ENCODE measurements at regions of chr1 and their contacts with region 1.

Region 1: DNA sequence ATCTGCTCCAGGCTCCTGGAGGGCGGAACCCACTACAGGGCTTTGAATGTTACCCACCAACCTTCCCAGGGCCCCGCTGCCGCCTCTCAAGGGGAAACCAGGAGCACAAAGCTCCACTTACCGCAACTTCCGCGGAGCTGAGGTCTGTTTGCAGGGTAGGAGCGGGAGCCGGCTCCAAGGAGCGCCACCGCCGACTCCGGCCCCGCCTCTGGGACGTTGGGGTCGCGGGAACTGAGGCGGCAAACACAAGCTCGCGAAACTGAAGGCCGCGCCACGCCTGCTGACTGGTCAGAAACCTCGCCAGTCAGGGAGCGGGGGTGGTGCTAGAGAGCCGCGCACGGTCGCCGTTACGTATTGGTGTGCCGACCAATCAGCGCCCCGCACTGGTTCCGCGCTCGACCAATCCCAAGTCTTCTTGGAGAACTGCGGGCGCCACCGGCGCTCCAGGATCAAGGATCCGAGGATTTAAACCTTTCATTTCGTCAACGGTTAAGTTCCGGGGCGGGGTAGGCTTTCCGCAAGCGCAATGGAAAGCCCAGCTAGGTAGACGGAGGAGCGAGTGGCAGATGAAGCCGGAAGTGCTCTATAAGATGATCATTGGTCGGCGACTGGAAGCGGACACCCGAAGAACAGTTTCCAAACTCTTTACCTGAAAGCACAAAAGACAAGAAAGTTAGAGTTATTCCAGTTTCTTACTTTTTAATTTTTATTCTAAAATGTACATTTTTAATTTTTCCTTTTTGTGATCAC is at the start of gene STIL:
- DNase-seq: peak; percentile 99
- H3K4me3 Mint-ChIP-seq: peak within 1 kb of the TSS; percentile 91
- H3K27ac Mint-ChIP-seq: peak within 1 kb of the TSS; percentile 94
- H3K4me1 Mint-ChIP-seq: peaks cover 5% of the 10 kb centered on the region
- H3K27me3 Mint-ChIP-seq: no peaks in the 10 kb centered on the region
- CTCF ChIP-seq: no peak
- total RNA-seq, gene STIL: 8.8 and 12.6 TPM in 2 replicates

Region 2: GRCh38 chr1:47325530-47325929 is 11.4 kb after region 1 on chr1:
- CTCF ChIA-PET with region 1: interaction called, 17 read pairs
- POLR2A ChIA-PET with region 1: interaction called, 32 read pairs
- intact Hi-C with region 1: no loop called
- DNase-seq: peak; percentile 78
- H3K4me3 Mint-ChIP-seq: no peak overlapping the region
- H3K27ac Mint-ChIP-seq: no peak overlapping the region
- H3K4me1 Mint-ChIP-seq: no peaks in the 10 kb centered on the region
- H3K27me3 Mint-ChIP-seq: no peaks in the 10 kb centered on the region
- CTCF ChIP-seq: no peak

Region 3: DNA sequence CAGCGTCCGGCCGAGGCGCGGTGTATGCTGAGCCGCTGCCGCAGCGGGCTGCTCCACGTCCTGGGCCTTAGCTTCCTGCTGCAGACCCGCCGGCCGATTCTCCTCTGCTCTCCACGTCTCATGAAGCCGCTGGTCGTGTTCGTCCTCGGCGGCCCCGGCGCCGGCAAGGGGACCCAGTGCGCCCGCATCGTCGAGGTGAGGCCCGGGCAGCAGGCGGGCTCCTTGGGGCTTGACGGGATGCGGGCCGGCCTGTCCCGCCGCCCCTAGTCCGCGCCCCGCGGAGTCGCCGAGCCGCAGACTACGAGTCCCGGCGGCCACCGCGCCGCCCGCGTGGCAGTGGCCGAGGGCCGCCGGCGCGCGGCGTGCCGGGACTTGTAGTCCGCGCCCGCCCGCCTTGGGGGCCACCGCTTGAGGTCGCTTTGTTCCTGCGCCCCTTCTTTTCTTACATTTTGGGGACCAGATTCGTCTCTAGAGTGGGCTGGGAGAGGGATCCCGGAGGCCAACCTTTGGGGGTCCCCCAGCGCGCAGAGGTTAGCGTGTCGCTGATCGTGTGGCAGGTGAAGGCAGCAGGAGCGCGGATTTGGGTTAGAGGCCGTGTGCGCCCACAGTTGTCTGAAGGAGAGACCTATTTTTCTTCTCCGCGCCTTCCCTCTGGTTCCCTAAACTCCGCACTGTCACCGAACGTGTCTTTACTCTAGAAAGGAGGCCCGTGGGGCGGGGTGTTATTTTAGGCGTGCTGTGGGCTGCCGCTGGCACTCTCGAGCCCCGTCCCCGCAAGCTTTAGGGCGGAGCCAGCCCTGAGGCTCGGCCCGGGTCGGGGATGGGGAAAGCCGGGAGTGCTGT is 20.1 kb after region 1 on chr1:
- CTCF ChIA-PET with region 1: interaction called, 4 read pairs
- POLR2A ChIA-PET with region 1: interaction called, 57 read pairs
- intact Hi-C with region 1: loop called (anchors 1 kb)
- DNase-seq: peak; percentile 73
- H3K4me3 Mint-ChIP-seq: no peak overlapping the region
- H3K27ac Mint-ChIP-seq: no peak overlapping the region
- H3K4me1 Mint-ChIP-seq: peaks cover 6% of the 10 kb centered on the region
- H3K27me3 Mint-ChIP-seq: no peaks in the 10 kb centered on the region
- CTCF ChIP-seq: peak; percentile 19

Measured in MCF 10A (cell line).